ENCODE measurements at regions of chr1 and their contacts with region 1.

Region 1: DNA sequence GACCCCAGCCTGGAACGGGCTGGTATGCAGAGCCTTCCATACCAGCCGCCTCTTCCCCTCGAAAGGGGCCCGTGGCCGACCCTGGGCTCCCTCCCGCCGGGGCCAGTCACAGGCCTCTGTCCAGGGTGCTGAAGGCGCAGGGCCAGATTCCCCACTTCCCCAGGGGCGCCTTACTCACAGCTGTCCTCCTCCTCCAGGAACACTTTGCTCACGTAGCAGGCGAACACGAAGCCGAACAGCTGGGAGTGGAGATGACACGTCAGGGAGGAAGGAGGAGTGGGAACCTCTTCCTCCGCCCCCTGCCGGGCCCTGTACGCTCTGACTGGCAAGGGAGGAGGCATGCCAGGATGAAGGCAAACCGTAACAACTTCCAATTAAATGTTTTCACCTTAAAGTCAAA is 57.3 kb downstream of the NKAIN1 start:
- DNase-seq: peak; percentile 42 to 82
- ATAC-seq: peak; percentile 80 to 85
- H3K4me3 ChIP-seq: peak overlapping the region; percentile 46
- H3K27ac ChIP-seq: no peak overlapping the region; a peak in 1 of 6 replicates
- H3K4me1 ChIP-seq: peaks cover 10% of the 10 kb centered on the region; the same call in 1 of the 3 replicates
- CTCF ChIP-seq: 0 out of 3 replicates have a peak, but pooled peaks have one; percentile 13
- EP300 ChIP-seq: no peak
- POLR2A ChIP-seq: no peak
- RAD21 ChIP-seq: no peak

Region 2: GRCh38 chr1:31166462-31166861 is 15.9 kb before region 1 on chr1:
- CTCF ChIA-PET with region 1: interaction called, 201 read pairs
- POLR2A ChIA-PET with region 1: no interaction called
- DNase-seq: no peak
- ATAC-seq: no peak
- H3K4me3 ChIP-seq: no peak overlapping the region
- H3K27ac ChIP-seq: peak overlapping the region in 1 of 2 experiments; percentile 60; a peak in 3 of 6 replicates
- H3K4me1 ChIP-seq: peaks cover 23% of the 10 kb centered on the region
- CTCF ChIP-seq: no peak
- EP300 ChIP-seq: no peak
- POLR2A ChIP-seq: no peak
- RAD21 ChIP-seq: no peak

Region 3: GRCh38 chr1:31289021-31289420 is 106.7 kb after region 1 on chr1:
- CTCF ChIA-PET with region 1: interaction called, 13 read pairs
- POLR2A ChIA-PET with region 1: no interaction called
- DNase-seq: no peak
- ATAC-seq: no peak
- H3K4me3 ChIP-seq: no peak overlapping the region
- H3K27ac ChIP-seq: no peak overlapping the region
- H3K4me1 ChIP-seq: no peaks in the 10 kb centered on the region
- CTCF ChIP-seq: no peak
- EP300 ChIP-seq: no peak
- POLR2A ChIP-seq: no peak
- RAD21 ChIP-seq: no peak

Region 4: DNA sequence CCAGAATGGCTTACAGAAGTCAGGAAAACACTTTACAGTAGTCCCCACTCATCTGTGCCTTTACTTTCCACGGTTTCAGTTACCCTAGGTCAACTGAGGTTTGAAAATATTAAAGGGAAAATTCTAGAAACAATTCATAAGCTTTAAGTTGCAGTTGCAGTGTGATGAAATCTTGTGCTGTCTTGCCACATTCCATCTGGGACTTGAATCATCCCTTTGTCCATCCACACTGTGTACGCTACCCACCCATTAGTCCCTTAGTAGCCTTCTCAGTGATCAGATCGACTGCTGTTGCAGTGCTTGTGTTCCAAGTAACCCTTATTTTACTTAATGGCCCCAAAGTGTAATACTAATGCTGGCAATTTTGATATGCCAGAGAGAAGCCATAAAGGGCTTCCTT is 145.0 kb after region 1 on chr1:
- CTCF ChIA-PET with region 1: interaction called, 24 read pairs
- POLR2A ChIA-PET with region 1: no interaction called
- DNase-seq: no peak
- ATAC-seq: no peak
- H3K4me3 ChIP-seq: no peak overlapping the region
- H3K27ac ChIP-seq: peak overlapping the region in 1 of 2 experiments; percentile 42; a peak in 1 of 6 replicates
- H3K4me1 ChIP-seq: no peaks in the 10 kb centered on the region; the same call in 2 of the 3 replicates
- CTCF ChIP-seq: no peak
- EP300 ChIP-seq: no peak
- POLR2A ChIP-seq: no peak
- RAD21 ChIP-seq: no peak

Region 5: DNA sequence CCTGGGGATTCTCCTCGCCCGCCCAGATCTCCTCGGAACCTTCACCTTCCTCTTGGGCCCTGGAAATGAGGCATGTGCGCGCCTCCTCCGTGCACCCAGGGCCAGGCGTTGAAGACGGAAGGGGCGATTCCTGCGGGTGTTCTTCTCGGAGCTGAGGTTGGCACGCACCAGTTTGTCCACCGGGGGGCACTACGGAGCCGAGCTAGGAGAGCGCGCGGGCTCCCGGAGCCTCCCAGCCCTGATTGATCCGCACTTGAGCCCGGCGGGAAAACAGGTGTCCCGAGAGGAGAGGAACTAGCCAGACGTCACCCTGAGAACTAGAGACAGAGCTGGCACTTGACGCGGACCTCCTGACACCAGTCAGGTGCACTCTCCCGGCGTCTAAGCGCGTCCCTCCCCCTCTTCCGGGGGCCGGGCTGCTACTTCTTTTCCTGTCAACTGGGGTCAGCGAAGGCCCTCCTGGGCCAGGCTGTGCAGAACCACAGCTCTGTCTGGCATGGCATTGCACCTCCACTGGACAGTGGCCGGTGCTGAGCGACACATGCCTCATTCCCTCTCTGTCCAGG is 212.4 kb after region 1 on chr1:
- CTCF ChIA-PET with region 1: interaction called, 22 read pairs
- POLR2A ChIA-PET with region 1: no interaction called
- DNase-seq: peak; percentile 71 to 78
- ATAC-seq: peak; percentile 95 to 98
- H3K4me3 ChIP-seq: peak overlapping the region; percentile 32; the same call in 2 of the 3 replicates
- H3K27ac ChIP-seq: peak overlapping the region; percentile 48 to 74; a peak in 5 of 6 replicates
- H3K4me1 ChIP-seq: 0 out of 3 replicates have a peak, but pooled peaks cover 5% of the 10 kb centered on the region
- CTCF ChIP-seq: peak; percentile 72
- EP300 ChIP-seq: no peak
- POLR2A ChIP-seq: no peak
- RAD21 ChIP-seq: peak; percentile 67 to 74

Region 6: DNA sequence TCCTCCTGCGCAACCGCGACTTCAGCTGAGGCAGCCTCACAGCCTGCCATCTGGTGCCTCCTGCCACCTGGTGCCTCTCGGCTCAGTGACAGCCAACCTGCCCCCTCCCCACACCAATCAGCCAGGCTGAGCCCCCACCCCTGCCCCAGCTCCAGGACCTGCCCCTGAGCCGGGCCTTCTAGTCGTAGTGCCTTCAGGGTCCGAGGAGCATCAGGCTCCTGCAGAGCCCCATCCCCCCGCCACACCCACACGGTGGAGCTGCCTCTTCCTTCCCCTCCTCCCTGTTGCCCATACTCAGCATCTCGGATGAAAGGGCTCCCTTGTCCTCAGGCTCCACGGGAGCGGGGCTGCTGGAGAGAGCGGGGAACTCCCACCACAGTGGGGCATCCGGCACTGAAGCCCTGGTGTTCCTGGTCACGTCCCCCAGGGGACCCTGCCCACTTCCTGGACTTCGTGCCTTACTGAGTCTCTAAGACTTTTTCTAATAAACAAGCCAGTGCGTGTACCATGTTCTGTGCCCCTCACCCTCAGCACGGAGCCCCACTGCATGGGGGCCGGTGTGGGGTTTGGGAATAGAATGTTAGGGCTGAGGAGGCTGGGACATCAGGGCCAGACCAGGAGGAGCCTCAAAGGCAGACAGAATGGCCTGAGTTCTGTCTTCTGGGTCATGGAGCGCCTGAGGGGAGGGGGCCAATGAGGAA is 252.0 kb after region 1 on chr1:
- CTCF ChIA-PET with region 1: no interaction called
- POLR2A ChIA-PET with region 1: no interaction called
- DNase-seq: no peak
- ATAC-seq: no peak; a peak in 1 of 6 replicates
- H3K4me3 ChIP-seq: no peak overlapping the region
- H3K27ac ChIP-seq: no peak overlapping the region
- H3K4me1 ChIP-seq: no peaks in the 10 kb centered on the region
- CTCF ChIP-seq: no peak
- EP300 ChIP-seq: no peak
- POLR2A ChIP-seq: no peak
- RAD21 ChIP-seq: no peak

Region 7: GRCh38 chr1:31548907-31549808 is 366.8 kb after region 1 on chr1:
- CTCF ChIA-PET with region 1: interaction called, 19 read pairs
- POLR2A ChIA-PET with region 1: no interaction called
- DNase-seq: peak; percentile 74 to 84
- ATAC-seq: peak; percentile 93 to 94
- H3K4me3 ChIP-seq: peak overlapping the region; percentile 45
- H3K27ac ChIP-seq: peak overlapping the region; percentile 83 to 93
- H3K4me1 ChIP-seq: peaks cover 14% of the 10 kb centered on the region
- CTCF ChIP-seq: peak; percentile 92
- EP300 ChIP-seq: no peak
- POLR2A ChIP-seq: no peak; the same call in 1 of the 2 replicates
- RAD21 ChIP-seq: peak; percentile 90 to 93

Measured in A549 (cell line).